ENCODE measurements at regions of chr9 and their contacts with region 1.

Region 1: DNA sequence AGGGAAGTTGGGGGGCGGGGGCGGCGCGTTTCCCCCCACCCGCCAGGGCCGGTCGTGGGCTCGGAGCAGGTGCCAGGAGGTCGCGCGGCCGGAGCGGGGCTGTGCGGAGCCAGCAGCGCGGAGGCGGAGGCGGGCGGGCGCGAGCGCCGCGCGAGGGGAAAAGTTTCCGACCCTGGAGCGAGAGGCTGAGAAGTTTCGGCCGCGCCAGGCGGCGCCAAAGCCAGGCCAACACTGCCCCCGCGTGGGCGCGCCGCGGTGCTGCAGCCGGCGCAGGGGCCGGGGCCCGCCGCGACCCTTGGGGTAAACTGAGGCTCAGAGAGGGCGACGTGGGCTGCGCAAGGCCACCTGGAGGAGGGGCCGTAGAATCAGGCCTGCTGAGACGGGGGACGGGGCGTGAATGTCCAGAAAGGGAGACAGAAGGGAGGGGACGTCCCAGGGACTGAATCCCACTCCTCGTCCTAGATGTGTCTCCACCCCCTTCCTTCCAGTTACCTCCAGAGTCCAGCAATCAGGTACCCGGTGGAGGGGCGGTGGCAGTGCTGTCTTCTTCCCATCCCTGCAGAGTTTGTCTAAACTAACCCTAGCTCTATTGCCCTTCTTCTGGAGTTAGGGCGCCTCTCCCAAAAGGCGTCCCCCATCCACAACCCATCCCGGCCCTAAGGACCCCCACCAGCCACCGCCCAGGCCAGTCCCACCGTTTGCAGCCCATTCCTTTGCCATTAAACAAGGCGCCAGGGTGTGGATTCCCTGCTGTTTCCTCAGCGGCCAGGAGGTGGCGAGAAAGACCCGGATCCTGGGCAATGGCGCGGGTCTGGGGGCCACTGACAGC is 10.2 kb downstream of the C9orf50 start:
- DNase-seq: peak; percentile 37
- H3K4me3 ChIP-seq: peak overlapping the region; percentile 52 to 62 (median 55)
- H3K27ac ChIP-seq: no peak overlapping the region
- H3K4me1 ChIP-seq: peaks cover 22% of the 10 kb centered on the region
- H3K27me3 ChIP-seq: no peaks in the 10 kb centered on the region
- CTCF ChIP-seq: peak; percentile 80 to 81

Region 2: DNA sequence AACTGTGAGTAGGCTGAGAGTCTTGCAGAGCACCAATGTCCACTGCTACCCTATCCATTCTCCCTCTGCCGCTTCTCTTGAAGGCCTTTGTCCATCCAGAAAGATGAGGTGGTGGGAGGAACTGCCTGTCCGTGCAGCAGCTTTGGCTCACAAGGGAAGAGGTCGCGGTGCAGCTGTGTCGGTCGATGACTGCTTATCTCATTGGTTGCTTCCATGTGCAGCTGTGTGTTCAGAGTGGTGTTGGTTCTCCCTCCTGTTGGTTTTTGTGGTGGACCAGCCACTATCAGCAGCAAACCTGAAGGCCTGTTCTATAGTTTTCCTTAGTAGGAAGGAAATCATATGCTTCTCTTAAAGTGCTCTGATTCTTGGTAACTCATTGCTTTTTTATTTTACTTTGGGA is 1017.6 kb before region 1 on chr9:
- CTCF ChIA-PET with region 1: no interaction called
- dilution Hi-C with region 1: no loop called
- in situ Hi-C with region 1: no loop called
- intact Hi-C with region 1: no loop called
- DNase-seq: no peak
- H3K4me3 ChIP-seq: no peak overlapping the region
- H3K27ac ChIP-seq: no peak overlapping the region
- H3K4me1 ChIP-seq: no peaks in the 10 kb centered on the region
- H3K27me3 ChIP-seq: no peaks in the 10 kb centered on the region
- CTCF ChIP-seq: no peak

Region 3: GRCh38 chr9:128992995-128993394 is 617.7 kb before region 1 on chr9:
- CTCF ChIA-PET with region 1: no interaction called
- dilution Hi-C with region 1: no loop called
- in situ Hi-C with region 1: no loop called
- intact Hi-C with region 1: loop called (anchors 5 kb)
- DNase-seq: peak; percentile 44
- H3K4me3 ChIP-seq: no peak overlapping the region
- H3K27ac ChIP-seq: no peak overlapping the region
- H3K4me1 ChIP-seq: peaks cover 15% of the 10 kb centered on the region
- H3K27me3 ChIP-seq: no peaks in the 10 kb centered on the region
- CTCF ChIP-seq: peak; percentile 39 to 78

Region 4: DNA sequence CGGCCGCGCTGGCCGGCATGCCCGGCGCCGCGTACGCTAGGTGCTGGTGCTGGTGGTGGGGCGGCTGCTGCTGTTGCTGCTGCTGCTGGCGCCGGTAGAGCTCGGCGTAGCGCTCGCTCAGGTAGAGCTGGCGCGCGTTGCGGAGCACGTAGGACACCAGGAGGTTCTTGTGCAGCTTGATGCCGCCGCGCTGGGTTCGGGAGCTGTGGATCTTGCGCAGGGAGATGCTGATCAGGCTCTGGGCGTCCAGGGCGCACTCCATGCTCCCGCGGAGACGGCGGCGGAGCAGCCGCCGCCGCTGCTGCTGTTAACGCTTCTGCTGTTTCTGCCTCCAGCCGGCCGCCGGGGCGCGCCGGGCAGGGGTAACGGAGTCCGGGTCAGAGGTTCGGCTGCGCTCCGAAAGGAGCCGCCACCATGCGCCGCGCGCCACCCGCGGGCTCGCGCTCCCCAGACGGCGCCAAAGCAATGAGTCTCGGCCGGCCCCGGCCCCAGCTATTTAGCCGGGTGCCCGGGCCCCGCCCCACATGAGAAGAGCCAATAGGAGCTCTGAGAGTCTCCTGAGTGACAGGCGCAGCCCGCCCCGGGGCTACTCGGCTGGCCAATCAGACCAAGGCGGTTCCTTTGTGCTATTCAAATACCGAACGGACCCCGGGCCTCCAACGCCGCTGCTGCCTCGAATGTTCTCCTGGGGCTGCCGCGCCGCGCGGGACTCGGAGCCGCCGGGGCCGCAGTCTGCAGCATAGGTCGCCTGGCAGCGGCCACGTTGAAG is 432.7 kb before region 1 on chr9 and contains the start of gene IER5L:
- CTCF ChIA-PET with region 1: interaction called, 5 read pairs
- dilution Hi-C with region 1: no loop called
- in situ Hi-C with region 1: loop called in 1 of 2 experiments (anchors 10 kb)
- intact Hi-C with region 1: loop called (anchors 1 kb)
- DNase-seq: peak; percentile 90
- H3K4me3 ChIP-seq: peak within 1 kb of the TSS; percentile 89 to 97 (median 97)
- H3K27ac ChIP-seq: no peak within 1 kb of the TSS
- H3K4me1 ChIP-seq: peaks cover 32% of the 10 kb centered on the region
- H3K27me3 ChIP-seq: no peaks in the 10 kb centered on the region
- CTCF ChIP-seq: peak in 1 of 2 donors; percentile 8
- total RNA-seq, gene IER5L: 13.5 to 34.2 TPM

Region 5: DNA sequence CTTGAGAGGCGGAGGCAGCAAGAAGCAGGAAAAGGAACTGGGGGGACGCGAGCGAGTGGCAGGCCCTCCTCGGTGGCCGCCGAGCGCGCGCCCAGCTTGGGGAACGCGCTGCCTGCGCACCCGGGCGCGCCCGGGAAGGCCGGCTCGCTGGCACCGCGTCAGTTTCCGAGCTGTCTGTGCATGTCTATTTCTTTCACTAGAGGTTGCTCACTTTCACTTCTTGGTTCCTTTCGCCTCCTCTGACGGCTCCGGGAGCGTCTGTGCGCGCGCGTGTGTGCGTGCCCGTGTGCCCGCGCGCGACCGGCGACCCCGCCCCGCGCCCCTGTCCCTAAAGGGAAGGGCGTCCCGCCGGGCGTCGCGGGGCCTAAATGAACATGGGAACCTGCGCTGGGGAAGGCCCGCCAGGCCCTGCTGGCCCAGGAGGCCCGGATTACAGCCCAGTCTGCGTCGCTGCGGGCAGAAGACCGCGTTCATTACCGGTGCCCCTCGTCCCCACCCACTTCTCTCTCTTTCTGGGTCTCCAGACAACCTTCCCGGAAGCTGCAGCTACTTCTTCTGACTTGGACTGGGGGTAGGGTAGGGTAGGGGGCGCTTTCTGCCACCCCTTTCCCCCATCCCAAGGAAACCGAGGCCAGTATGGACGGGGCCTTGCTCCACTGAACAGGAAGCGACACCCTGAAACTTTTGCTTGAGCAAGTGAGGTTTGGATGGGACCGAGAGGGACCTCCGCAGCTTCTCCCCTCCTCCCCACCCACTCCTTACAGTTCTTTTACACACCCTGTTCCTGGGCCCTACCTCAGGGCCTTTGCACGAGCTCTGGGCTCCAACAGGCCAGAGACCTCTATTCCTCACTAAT is 226.9 kb before region 1 on chr9:
- CTCF ChIA-PET with region 1: no interaction called
- dilution Hi-C with region 1: no loop called
- in situ Hi-C with region 1: no loop called
- intact Hi-C with region 1: loop called (anchors 2 kb)
- DNase-seq: peak; percentile 73
- H3K4me3 ChIP-seq: peak overlapping the region; percentile 37 to 58 (median 45)
- H3K27ac ChIP-seq: no peak overlapping the region
- H3K4me1 ChIP-seq: peaks cover 16% of the 10 kb centered on the region
- H3K27me3 ChIP-seq: no peaks in the 10 kb centered on the region
- CTCF ChIP-seq: peak in 1 of 2 donors; percentile 31

Region 6: DNA sequence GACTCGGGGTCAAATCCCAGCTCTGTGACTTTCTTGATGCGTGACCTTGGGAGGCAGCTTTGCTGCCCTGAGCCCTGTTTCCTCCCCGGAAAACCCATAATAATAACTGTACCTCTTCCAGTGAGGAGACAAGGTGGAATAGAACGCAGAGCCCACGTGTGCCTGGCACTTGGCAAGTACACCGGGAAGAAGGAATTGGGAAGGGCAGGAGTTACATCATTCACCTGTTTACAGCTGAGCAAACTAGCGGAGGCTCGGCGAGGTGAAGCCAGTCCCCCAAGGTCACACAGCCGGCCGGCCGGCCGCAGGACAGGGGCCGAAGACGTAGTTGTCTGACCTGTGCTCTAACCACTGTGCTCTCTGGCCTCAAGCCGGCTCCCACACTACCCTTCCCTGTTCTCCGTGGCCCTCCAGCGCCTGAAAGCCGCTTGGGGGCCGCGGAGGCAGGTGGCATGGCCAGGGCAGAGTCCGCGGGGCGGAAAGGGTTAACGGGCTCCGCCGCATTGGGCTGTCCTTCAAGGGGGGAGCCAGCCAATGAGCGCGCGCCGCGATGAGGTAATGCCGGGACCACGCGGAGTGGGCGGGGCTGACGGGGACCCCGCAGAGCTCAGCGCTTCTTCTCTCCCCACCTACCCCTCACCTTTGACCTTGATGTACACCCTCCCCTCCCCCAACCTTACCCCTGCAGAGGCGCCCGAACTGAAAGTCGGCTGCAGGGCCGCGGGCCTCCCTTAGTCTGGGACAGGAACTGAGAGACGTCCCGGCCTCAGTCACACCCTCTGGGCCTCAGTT is 115.0 kb before region 1 on chr9:
- CTCF ChIA-PET with region 1: no interaction called
- dilution Hi-C with region 1: no loop called
- in situ Hi-C with region 1: no loop called
- intact Hi-C with region 1: loop called (anchors 5 kb)
- DNase-seq: peak; percentile 63
- H3K4me3 ChIP-seq: peak overlapping the region; percentile 51 to 61 (median 51)
- H3K27ac ChIP-seq: peak overlapping the region; percentile 45
- H3K4me1 ChIP-seq: peaks cover 16% of the 10 kb centered on the region
- H3K27me3 ChIP-seq: no peaks in the 10 kb centered on the region
- CTCF ChIP-seq: no peak

Measured in mammary epithelial cell (primary cell).